OCI-LY7 (cell line): ENCODE measurements at regions of chr3 and their contacts with region 1.

Region 1: GRCh38 chr3:114005481-114005880 is 50.8 kb downstream of the CCDC191 start:
- DNase-seq: peak; percentile 97
- H3K4me3 ChIP-seq: peak overlapping the region; percentile 59
- H3K27ac ChIP-seq: peak overlapping the region; percentile 97
- H3K4me1 ChIP-seq: peaks cover 74% of the 10 kb centered on the region
- CTCF ChIP-seq: peak; percentile 67

Region 2: DNA sequence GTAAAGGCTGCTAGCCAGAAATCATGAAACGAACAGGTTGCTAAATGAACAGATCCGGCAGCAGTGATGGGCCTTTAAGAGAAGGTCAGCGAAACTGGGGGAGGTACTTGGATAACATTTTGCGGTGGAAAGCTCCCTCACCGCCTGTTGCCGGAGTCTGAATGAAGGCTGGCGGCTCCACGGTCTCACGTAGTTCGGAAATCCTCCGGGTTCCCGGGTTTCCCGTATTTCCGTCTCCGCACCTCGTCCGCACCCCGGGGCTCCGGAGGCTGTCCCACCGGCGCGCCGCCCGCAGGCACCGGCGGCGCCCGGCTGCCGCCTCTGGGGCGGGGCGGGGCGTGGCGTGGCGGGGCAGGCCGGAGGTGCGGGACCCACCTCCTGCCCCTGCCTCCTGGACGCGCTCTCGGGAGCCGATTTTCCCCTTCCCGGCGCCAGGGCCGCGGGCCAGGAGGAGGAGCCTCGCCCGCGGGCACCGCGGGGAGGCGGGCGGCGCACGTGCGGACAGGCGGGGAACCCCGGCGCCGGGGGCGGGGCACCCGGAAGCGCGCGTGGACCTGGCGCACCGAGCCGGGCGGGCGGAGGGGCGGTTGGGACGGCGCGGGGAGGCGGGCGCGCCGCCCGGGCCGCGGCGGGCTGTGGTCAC is 58.0 kb before region 1 on chr3 and contains the start of gene ZDHHC23:
- CTCF ChIA-PET with region 1: no interaction called
- POLR2A ChIA-PET with region 1: no interaction called
- intact Hi-C with region 1: loop called (anchors 1 kb)
- DNase-seq: peak; percentile 75
- H3K4me3 ChIP-seq: peak within 1 kb of the TSS; percentile 84
- H3K27ac ChIP-seq: peak within 1 kb of the TSS; percentile 58
- H3K4me1 ChIP-seq: peaks cover 27% of the 10 kb centered on the region
- CTCF ChIP-seq: no peak
- total RNA-seq, gene ZDHHC23: 36.9 and 37.5 TPM in 2 replicates

Region 3: GRCh38 chr3:115685097-115685496 is 1679.6 kb after region 1 on chr3:
- CTCF ChIA-PET with region 1: no interaction called
- POLR2A ChIA-PET with region 1: no interaction called
- intact Hi-C with region 1: no loop called
- DNase-seq: no peak
- H3K4me3 ChIP-seq: no peak overlapping the region
- H3K27ac ChIP-seq: no peak overlapping the region
- H3K4me1 ChIP-seq: no peaks in the 10 kb centered on the region
- CTCF ChIP-seq: no peak